A673 (cell line): ENCODE measurements at regions of chr6 and their contacts with region 1.

Region 1: GRCh38 chr6:48087448-48087847 is 23.5 kb downstream of the PTCHD4 start:
- DNase-seq: peak; percentile 39
- H3K4me3 ChIP-seq: no peak overlapping the region
- H3K27ac ChIP-seq: no peak overlapping the region
- H3K4me1 ChIP-seq: peaks cover 3% of the 10 kb centered on the region
- H3K27me3 ChIP-seq: no peaks in the 10 kb centered on the region
- CTCF ChIP-seq: peak; percentile 56

Region 2: DNA sequence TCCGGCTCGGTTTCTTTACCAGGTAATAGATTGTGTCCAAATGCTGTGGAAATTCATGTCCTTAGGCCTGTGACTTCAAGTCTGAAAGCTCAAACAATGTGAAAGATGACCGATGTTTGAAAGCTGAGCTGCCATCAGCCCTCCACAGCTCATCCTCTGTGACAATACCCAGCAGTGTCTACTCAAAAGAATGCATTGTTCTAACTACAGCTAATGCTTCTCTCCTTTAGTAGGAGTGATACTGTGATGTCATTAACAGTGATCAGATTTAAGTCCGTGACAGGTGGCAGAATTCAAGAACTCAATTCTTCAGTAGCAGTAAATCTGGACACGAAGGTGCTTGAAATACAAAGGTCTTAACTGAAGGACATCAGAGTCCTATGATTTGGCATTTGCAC is 1693.5 kb before region 1 on chr6:
- CTCF ChIA-PET with region 1: no interaction called
- POLR2A ChIA-PET with region 1: no interaction called
- intact Hi-C with region 1: no loop called
- DNase-seq: no peak
- H3K4me3 ChIP-seq: no peak overlapping the region
- H3K27ac ChIP-seq: no peak overlapping the region
- H3K4me1 ChIP-seq: no peaks in the 10 kb centered on the region
- H3K27me3 ChIP-seq: peaks cover 39% of the 10 kb centered on the region
- CTCF ChIP-seq: no peak

Region 3: DNA sequence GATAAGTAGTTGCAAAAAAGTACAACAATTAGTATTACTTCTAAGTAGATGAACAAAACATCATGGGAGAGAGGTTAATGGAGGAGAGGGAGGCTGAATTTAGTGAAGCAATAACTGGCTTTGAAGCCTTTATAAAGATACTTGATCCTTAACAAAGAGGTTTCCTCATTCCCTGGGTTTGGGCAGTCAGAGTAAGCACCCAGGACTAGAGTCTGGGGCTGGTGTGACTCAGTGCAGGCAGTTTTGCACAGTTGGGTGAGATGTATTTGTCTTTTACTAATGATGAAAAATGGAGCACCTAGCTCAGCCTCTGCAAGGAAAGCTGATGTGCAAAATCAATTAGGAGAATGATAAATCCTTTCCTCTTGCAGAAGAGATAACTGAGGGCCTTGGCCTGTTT is 317.5 kb before region 1 on chr6:
- CTCF ChIA-PET with region 1: no interaction called
- POLR2A ChIA-PET with region 1: no interaction called
- intact Hi-C with region 1: no loop called
- DNase-seq: no peak
- H3K4me3 ChIP-seq: no peak overlapping the region
- H3K27ac ChIP-seq: no peak overlapping the region
- H3K4me1 ChIP-seq: no peaks in the 10 kb centered on the region
- H3K27me3 ChIP-seq: no peaks in the 10 kb centered on the region
- CTCF ChIP-seq: no peak

Region 4: DNA sequence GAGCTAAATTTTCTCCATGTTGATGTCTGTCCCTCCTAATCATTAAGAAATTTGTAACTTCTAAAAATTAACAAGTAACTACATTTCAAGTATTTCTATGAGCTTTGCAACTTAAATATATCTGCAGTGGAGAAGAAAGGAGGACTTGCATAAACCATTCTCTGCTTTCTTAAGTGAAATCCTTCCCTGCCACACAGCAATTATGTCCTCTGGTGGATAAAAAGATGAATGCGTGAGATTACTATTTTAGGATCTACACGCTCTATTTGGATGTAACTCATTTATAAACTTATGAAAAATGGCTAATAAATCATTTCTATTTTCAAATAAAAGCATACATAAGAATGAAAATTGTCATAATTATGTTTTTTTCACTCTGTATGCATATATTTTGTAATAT is 361.6 kb after region 1 on chr6:
- CTCF ChIA-PET with region 1: no interaction called
- POLR2A ChIA-PET with region 1: no interaction called
- intact Hi-C with region 1: loop called (anchors 10 kb)
- DNase-seq: peak; percentile 4
- H3K4me3 ChIP-seq: no peak overlapping the region
- H3K27ac ChIP-seq: no peak overlapping the region
- H3K4me1 ChIP-seq: no peaks in the 10 kb centered on the region
- H3K27me3 ChIP-seq: no peaks in the 10 kb centered on the region
- CTCF ChIP-seq: peak; percentile 42

Region 5: DNA sequence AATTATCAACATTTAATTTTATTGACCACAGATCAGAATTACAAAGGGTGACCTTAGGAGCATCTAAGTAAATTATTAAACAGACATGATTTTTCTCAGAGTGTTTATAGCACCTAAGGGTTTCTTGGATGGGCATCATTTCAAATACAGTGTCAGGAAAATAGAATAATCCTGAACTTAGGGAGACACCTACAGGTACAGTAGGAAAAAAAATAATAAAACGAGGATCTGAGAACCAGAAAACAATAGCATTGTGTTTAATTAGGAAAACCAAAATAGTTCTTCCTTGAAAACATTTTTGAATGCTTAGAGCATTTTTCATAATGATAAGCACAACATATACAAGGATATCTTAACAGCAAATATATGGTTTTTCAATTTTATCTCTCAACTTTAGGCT is 1336.4 kb after region 1 on chr6:
- CTCF ChIA-PET with region 1: no interaction called
- POLR2A ChIA-PET with region 1: no interaction called
- intact Hi-C with region 1: loop called (anchors 5 kb)
- DNase-seq: peak; percentile 30
- H3K4me3 ChIP-seq: no peak overlapping the region
- H3K27ac ChIP-seq: no peak overlapping the region
- H3K4me1 ChIP-seq: no peaks in the 10 kb centered on the region
- H3K27me3 ChIP-seq: no peaks in the 10 kb centered on the region
- CTCF ChIP-seq: peak; percentile 49